ENCODE measurements at regions of chr9 and their contacts with region 1.

Region 1: GRCh38 chr9:84261082-84261746 is 79.3 kb downstream of the SLC28A3 start:
- DNase-seq: peak; percentile 81 to 91
- ATAC-seq: peak; percentile 97 to 100 (median 98)
- H3K4me3 ChIP-seq: peak overlapping the region; percentile 22
- H3K27ac ChIP-seq: no peak overlapping the region
- H3K4me1 ChIP-seq: no peaks in the 10 kb centered on the region
- H3K27me3 ChIP-seq: peaks cover 0 to 2% (median 0%) of the 10 kb centered on the region in 3 donors
- CTCF ChIP-seq: peak; percentile 97

Region 2: DNA sequence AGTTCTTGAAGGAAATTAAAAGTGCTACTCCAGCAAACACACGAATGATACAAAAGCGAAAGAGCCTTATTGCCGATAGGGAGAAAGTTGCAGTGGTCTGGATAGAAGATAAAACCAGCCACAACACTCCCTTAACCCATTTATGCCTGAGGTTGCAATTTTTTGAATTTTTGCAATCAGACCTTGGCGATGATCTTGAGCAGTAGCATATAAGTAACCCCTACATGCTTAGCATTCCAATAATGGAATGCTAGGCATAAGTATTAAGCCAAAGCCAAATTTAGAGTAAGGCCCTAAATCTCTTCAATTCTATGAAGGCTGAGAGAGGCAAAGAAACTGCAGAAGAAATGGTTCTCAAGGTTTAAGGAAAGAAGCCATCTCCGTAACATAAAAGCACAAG is 74.1 kb before region 1 on chr9:
- intact Hi-C with region 1: no loop called
- DNase-seq: no peak
- ATAC-seq: no peak
- H3K4me3 ChIP-seq: no peak overlapping the region
- H3K27ac ChIP-seq: no peak overlapping the region
- H3K4me1 ChIP-seq: peaks cover 6% of the 10 kb centered on the region
- H3K27me3 ChIP-seq: no peaks in the 10 kb centered on the region
- CTCF ChIP-seq: no peak

Region 3: GRCh38 chr9:84315278-84315877 is 54.2 kb after region 1 on chr9:
- intact Hi-C with region 1: loop called in 1 of 2 experiments (anchors 5 kb)
- DNase-seq: peak in 1 of 2 donors; percentile 37
- ATAC-seq: peak in 2 of 4 donors; percentile 36 to 67
- H3K4me3 ChIP-seq: no peak overlapping the region
- H3K27ac ChIP-seq: no peak overlapping the region
- H3K4me1 ChIP-seq: no peaks in the 10 kb centered on the region
- H3K27me3 ChIP-seq: peaks cover 0 to 2% (median 0%) of the 10 kb centered on the region in 3 donors
- CTCF ChIP-seq: peak; percentile 82